WTC11 (cell line): ENCODE measurements at regions of chr17 and their contacts with region 1.

Region 1: DNA sequence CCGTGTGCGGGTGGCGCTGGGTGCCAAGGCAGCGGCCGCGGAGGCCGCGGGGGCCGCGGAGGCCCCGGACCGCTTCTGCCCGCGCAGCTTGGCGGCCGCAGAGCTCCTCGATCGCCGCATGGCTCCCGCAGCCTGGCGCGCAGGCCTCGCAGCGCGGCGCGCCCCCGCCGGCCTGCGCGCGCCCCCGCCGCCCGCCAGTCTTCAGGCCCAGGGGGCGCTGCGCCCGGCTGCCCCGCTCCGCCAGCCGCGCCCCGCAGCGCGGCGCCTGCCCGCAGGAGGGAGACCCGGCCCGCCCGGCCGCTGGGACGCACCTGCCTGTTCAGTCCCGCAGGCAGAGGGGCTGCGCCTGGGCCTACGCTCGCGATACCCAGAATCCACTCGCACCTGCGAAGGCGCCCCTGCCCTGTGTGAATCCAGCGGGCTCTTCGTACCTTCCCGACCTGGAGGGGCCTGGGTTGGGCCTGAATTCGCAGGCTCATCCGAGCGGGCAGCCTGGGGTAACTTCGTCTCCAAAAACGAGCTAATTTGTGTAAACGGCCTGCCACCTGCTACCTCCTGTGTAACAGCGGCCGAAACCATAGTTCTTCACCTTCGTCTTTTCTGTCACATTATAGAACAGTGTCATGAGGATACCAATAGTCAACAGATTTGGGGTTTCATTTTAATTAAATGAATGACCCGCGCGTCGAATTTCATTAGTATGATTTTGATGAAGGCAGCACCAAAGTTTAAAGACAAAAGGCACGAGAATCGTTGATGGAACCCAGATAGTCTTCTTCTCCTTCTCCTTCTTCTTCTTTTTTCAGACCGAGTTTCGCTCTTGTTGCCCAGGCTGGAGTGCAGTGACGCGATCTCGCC is at the start of gene CENPV:
- DNase-seq: peak; percentile 86
- ATAC-seq: peak; percentile 92
- H3K4me3 Mint-ChIP-seq: peak within 1 kb of the TSS; percentile 93
- H3K27ac Mint-ChIP-seq: peak within 1 kb of the TSS; percentile 90
- H3K4me1 Mint-ChIP-seq: peaks cover 28% of the 10 kb centered on the region
- H3K27me3 Mint-ChIP-seq: peaks cover 24% of the 10 kb centered on the region
- CTCF ChIP-seq: no peak
- total RNA-seq, gene CENPV: 151 to 152 TPM (median 151 TPM) in 3 replicates

Region 2: GRCh38 chr17:16285957-16286640 is 67.4 kb before region 1 on chr17:
- CTCF ChIA-PET with region 1: interaction called, 12 read pairs
- POLR2A ChIA-PET with region 1: no interaction called
- DNase-seq: peak; percentile 81
- ATAC-seq: peak; percentile 99
- H3K4me3 Mint-ChIP-seq: peak overlapping the region; percentile 47
- H3K27ac Mint-ChIP-seq: no peak overlapping the region
- H3K4me1 Mint-ChIP-seq: peaks cover 18% of the 10 kb centered on the region
- H3K27me3 Mint-ChIP-seq: peaks cover 18% of the 10 kb centered on the region
- CTCF ChIP-seq: peak; percentile 56

Region 3: DNA sequence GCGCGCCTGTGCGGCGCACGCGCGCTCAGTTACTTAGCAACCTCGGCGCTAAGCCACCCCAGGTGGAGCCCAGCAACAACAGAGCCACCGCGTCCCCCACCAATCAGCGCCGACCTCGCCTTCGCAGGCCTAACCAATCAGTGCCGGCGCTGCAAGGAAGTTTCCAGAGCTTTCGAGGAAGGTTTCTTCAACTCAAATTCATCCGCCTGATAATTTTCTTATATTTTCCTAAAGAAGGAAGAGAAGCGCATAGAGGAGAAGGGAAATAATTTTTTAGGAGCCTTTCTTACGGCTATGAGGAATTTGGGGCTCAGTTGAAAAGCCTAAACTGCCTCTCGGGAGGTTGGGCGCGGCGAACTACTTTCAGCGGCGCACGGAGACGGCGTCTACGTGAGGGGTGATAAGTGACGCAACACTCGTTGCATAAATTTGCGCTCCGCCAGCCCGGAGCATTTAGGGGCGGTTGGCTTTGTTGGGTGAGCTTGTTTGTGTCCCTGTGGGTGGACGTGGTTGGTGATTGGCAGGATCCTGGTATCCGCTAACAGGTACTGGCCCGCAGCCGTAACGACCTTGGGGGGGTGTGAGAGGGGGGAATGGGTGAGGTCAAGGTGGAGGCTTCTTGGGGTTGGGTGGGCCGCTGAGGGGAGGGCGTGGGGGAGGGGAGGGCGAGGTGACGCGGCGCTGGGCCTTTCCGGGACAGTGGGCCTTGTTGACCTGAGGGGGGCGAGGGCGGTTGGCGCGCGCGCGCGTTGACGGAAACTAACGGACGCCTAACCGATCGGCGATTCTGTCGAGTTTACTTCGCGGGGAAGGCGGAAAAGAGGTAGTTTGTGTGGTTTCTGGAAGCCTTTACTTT is 27.3 kb after region 1 on chr17 and contains the start of gene UBB:
- CTCF ChIA-PET with region 1: interaction called, 5 read pairs
- POLR2A ChIA-PET with region 1: interaction called, 12 read pairs
- DNase-seq: peak; percentile 97
- ATAC-seq: peak; percentile 95
- H3K4me3 Mint-ChIP-seq: peak within 1 kb of the TSS; percentile 91
- H3K27ac Mint-ChIP-seq: peak within 1 kb of the TSS; percentile 98
- H3K4me1 Mint-ChIP-seq: peaks cover 25% of the 10 kb centered on the region
- H3K27me3 Mint-ChIP-seq: no peaks in the 10 kb centered on the region
- CTCF ChIP-seq: no peak
- total RNA-seq, gene UBB: 1,216 to 1,403 TPM (median 1,352 TPM) in 3 replicates

Region 4: GRCh38 chr17:16415031-16415924 is 61.7 kb after region 1 on chr17 and contains the start of gene TRPV2:
- CTCF ChIA-PET with region 1: interaction called, 19 read pairs
- POLR2A ChIA-PET with region 1: no interaction called
- DNase-seq: peak; percentile 62
- ATAC-seq: peak; percentile 87
- H3K4me3 Mint-ChIP-seq: no peak within 1 kb of the TSS; the same call in 1 of the 2 replicates
- H3K27ac Mint-ChIP-seq: no peak within 1 kb of the TSS
- H3K4me1 Mint-ChIP-seq: peaks cover 27% of the 10 kb centered on the region
- H3K27me3 Mint-ChIP-seq: no peaks in the 10 kb centered on the region; the same call in 1 of the 2 replicates
- CTCF ChIP-seq: peak; percentile 23; the same call in 1 of the 2 replicates
- total RNA-seq, gene TRPV2: 3.5 to 4.9 TPM (median 4.3 TPM) in 3 replicates

Region 5: DNA sequence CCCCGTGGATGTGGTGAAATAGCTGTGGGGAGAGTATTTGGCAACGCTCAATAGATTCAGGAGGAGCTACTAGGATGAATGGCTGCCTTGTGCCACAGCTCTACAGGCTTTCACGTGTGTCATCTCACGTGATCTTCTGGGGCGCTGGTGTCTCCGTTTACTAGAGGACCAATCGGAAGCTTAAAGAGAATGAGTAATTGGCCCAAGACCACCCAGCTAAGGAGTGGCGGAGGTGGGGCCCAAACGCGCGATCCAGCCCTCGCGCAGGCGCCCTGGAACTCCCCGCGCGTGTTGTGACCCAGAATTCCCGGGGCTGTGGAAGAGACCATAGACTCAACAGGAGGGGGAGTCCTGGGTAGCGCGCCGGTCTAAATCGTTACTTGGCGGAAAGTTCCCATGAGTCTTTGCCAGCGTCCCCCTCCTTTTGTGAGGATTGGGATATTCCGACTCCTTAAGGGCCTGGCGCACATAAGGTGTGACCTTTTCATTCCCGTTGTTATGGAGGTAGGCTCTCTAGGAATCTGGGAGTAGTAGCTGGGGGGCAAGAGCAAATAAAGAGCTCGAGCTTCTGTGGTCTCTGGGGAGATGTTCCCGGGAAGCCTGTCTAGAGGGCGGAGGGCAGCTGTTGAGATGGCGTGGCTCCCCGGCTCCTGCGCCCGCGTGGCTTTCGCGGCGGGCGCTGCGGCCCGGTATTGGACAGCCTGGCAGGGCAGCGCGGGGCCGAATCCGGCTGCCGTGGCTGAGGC is 85.2 kb after region 1 on chr17:
- CTCF ChIA-PET with region 1: interaction called, 13 read pairs
- POLR2A ChIA-PET with region 1: interaction called, 14 read pairs
- DNase-seq: peak; percentile 95
- ATAC-seq: peak; percentile 64
- H3K4me3 Mint-ChIP-seq: peak overlapping the region; percentile 99
- H3K27ac Mint-ChIP-seq: peak overlapping the region; percentile 100
- H3K4me1 Mint-ChIP-seq: peaks cover 66% of the 10 kb centered on the region
- H3K27me3 Mint-ChIP-seq: no peaks in the 10 kb centered on the region; the same call in 1 of the 2 replicates
- CTCF ChIP-seq: no peak

Region 6: DNA sequence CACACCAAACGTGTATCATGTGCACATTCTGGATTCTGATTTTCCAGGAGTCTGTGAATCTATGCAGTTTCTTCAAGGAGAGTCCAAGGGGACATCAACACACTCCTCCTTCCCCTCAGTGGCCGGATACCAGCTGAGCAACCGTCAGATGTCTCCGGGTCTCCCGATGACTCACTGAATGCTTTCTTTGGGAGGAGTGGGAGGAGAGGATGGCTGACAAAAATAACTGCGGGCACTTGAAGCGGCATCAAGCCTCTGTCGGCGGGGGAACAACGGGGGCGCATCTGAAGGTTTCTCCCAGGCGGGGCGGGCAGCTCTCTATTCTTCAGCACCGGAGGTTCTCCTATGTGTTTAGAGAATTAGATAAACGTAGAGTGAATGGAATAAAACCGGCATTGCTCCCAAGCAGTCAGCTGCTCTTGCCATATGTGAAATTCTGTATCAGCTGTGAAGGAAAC is 163.1 kb after region 1 on chr17:
- CTCF ChIA-PET with region 1: no interaction called
- POLR2A ChIA-PET with region 1: no interaction called
- DNase-seq: no peak
- ATAC-seq: peak; percentile 43
- H3K4me3 Mint-ChIP-seq: no peak overlapping the region
- H3K27ac Mint-ChIP-seq: no peak overlapping the region
- H3K4me1 Mint-ChIP-seq: peaks cover 31% of the 10 kb centered on the region
- H3K27me3 Mint-ChIP-seq: peaks cover 23% of the 10 kb centered on the region
- CTCF ChIP-seq: no peak